ENCODE measurements at regions of chr17 and their contacts with region 1.

Region 1: GRCh38 chr17:39244600-39245570 is 19.1 kb upstream of the STAC2 start:
- DNase-seq: peak; percentile 62 to 96 (median 90)

Region 2: GRCh38 chr17:38982858-38983746 is 261.8 kb before region 1 on chr17:
- intact Hi-C with region 1: loop called (anchors 10 kb)
- DNase-seq: peak in 31 of 42 donors; percentile 12 to 75 (median 44)

Region 3: DNA sequence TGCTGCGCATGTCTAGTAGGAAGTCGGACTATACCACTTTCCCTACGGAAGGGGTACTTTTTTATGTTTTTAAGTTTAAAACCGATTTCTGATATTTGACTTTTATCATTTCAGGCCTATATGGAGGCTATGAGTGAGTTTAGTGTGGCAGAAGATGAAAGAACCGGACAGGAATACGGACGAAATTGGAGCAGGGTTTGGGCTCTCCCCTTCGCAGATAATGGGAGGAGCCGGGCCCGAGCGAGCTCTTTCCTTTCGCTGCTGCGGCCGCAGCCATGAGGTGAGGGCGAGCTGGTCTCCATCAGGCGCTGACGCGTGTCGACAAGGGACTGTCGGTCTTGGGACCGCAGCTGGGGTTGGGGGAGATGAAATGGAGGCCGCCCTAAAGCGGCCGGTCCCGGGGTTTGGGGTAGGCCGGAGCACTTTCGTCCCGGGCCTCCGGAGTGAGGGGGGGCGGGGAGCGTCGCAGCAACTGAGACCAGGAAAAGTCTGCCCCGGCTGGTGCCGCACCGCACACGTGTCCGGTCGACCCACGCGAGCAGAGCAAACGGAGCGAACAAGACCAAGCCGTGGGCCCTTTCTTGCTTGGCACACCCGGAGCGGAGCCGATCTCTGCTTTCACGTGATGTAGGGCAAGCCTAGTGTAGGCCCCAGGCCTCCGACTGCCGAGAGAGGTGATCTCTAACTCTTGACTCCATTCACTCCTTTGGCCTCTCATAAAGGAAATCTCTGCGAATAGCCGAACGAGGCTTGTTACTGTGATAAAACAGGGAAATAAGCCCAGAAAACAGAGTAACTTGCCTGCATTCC is 44.6 kb before region 1 on chr17 and contains the start of gene RPL19:
- intact Hi-C with region 1: no loop called
- DNase-seq: peak; percentile 45 to 91 (median 80)